CD4-positive, alpha-beta T cell (primary cell): ENCODE measurements at regions of chr12 and their contacts with region 1.

Region 1: DNA sequence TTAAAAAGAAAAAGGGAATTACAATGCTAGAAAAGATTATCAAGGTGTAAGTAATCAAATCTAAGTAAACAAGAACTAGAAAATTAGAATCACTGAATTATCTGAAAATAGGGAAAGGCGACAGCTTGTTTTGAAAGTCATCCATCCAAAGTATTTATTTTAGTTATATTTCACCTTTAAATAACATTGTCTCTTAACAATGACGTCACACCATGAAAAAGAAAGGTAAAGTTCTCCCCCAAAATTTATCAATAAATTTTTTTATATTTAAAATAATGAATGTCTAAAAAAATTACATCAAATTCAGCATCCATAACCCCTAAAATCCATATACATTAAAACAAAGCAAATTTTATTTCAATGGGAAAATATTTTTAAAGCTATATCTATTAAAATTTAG is 223.2 kb downstream of the RERGL start:
- DNase-seq: no peak
- ATAC-seq: no peak
- H3K4me3 ChIP-seq: no peak overlapping the region
- H3K4me3 Mint-ChIP-seq: no peak overlapping the region
- H3K27ac ChIP-seq: no peak overlapping the region
- H3K27ac Mint-ChIP-seq: no peak overlapping the region
- H3K4me1 ChIP-seq: no peaks in the 10 kb centered on the region
- H3K4me1 Mint-ChIP-seq: no peaks in the 10 kb centered on the region
- H3K27me3 ChIP-seq: no peaks in the 10 kb centered on the region
- H3K27me3 Mint-ChIP-seq: no peaks in the 10 kb centered on the region
- CTCF ChIP-seq: no peak

Region 2: DNA sequence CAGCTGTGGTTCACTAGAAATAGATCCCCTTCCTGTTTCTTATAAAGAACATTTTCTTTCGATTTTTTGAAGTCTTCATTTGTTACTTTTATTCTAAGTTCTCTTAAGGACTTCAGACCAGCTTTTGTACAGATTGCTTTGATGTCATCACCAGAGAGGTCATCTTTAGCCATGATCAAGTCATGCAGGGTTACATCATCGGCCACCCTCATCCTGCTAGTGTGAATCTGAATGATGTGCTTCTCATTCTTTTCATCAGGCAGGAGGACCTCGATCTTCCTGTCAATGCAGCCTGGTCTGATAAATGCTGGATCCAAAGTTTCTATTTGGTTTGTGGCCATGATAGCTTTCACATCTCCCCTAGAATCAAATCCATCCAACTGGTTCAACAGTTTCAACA is 483.5 kb before region 1 on chr12:
- CTCF ChIA-PET with region 1: no interaction called
- POLR2A ChIA-PET with region 1: no interaction called
- intact Hi-C with region 1: no loop called
- DNase-seq: no peak
- ATAC-seq: no peak
- H3K4me3 ChIP-seq: no peak overlapping the region
- H3K4me3 Mint-ChIP-seq: no peak overlapping the region
- H3K27ac ChIP-seq: no peak overlapping the region
- H3K27ac Mint-ChIP-seq: no peak overlapping the region
- H3K4me1 ChIP-seq: no peaks in the 10 kb centered on the region
- H3K4me1 Mint-ChIP-seq: no peaks in the 10 kb centered on the region
- H3K27me3 ChIP-seq: no peaks in the 10 kb centered on the region
- H3K27me3 Mint-ChIP-seq: no peaks in the 10 kb centered on the region
- CTCF ChIP-seq: no peak

Region 3: GRCh38 chr12:17778242-17778641 is 88.6 kb before region 1 on chr12:
- CTCF ChIA-PET with region 1: no interaction called
- POLR2A ChIA-PET with region 1: no interaction called
- intact Hi-C with region 1: loop called (anchors 2 kb)
- DNase-seq: no peak
- ATAC-seq: no peak
- H3K4me3 ChIP-seq: no peak overlapping the region
- H3K4me3 Mint-ChIP-seq: no peak overlapping the region
- H3K27ac ChIP-seq: no peak overlapping the region
- H3K27ac Mint-ChIP-seq: no peak overlapping the region
- H3K4me1 ChIP-seq: no peaks in the 10 kb centered on the region
- H3K4me1 Mint-ChIP-seq: no peaks in the 10 kb centered on the region
- H3K27me3 ChIP-seq: no peaks in the 10 kb centered on the region
- H3K27me3 Mint-ChIP-seq: no peaks in the 10 kb centered on the region
- CTCF ChIP-seq: no peak

Region 4: GRCh38 chr12:18079541-18080246 is 212.9 kb after region 1 on chr12:
- CTCF ChIA-PET with region 1: no interaction called
- POLR2A ChIA-PET with region 1: no interaction called
- intact Hi-C with region 1: loop called in 1 of 2 experiments (anchors 5 kb)
- DNase-seq: no peak
- ATAC-seq: no peak
- H3K4me3 ChIP-seq: no peak overlapping the region
- H3K4me3 Mint-ChIP-seq: no peak overlapping the region
- H3K27ac ChIP-seq: no peak overlapping the region
- H3K27ac Mint-ChIP-seq: no peak overlapping the region
- H3K4me1 ChIP-seq: no peaks in the 10 kb centered on the region
- H3K4me1 Mint-ChIP-seq: no peaks in the 10 kb centered on the region
- H3K27me3 ChIP-seq: no peaks in the 10 kb centered on the region
- H3K27me3 Mint-ChIP-seq: no peaks in the 10 kb centered on the region
- CTCF ChIP-seq: no peak